B cell (primary cell): ENCODE measurements at regions of chr7 and their contacts with region 1.

Region 1: DNA sequence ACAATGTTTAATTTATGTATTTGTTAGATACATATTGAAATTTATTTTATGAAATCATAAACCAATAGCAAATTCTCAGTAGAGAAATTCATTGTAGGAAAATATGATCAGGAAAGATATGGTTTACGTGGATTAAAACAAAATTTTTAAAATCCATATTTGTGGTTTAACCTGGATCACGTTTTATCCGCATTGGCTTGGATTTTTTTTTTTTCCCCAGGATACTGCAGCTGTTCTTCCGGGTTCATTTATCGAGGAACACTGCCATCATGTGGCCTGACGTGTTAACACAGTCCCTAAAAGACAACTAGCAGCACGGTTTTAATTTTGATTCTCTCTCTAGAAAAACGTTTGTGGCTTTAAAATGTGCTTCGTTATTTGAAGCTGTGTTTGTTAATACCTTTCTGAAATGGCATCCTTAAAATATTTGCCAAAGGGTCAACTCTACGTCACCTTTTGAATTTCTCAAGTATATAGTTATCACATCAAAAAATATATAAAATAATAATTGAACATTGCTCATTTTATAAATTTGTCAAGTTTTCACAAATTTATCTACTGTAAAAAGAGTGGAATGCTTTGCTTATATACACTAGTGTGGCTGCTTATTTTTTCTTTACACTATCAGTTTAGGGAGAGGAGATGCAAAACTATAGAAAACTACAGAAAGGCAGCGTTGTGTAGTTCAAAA is 8.7 kb upstream of the ASB4 start:
- DNase-seq: peak; percentile 70
- ATAC-seq: peak; percentile 64
- H3K4me3 ChIP-seq: no peak overlapping the region
- H3K4me3 Mint-ChIP-seq: no peak overlapping the region
- H3K27ac ChIP-seq: no peak overlapping the region
- H3K27ac Mint-ChIP-seq: no peak overlapping the region
- H3K4me1 ChIP-seq: no peaks in the 10 kb centered on the region
- H3K4me1 Mint-ChIP-seq: peaks cover 3% of the 10 kb centered on the region
- H3K27me3 ChIP-seq: no peaks in the 10 kb centered on the region
- H3K27me3 Mint-ChIP-seq: peaks cover 8% of the 10 kb centered on the region
- CTCF ChIP-seq: peak; percentile 91

Region 2: DNA sequence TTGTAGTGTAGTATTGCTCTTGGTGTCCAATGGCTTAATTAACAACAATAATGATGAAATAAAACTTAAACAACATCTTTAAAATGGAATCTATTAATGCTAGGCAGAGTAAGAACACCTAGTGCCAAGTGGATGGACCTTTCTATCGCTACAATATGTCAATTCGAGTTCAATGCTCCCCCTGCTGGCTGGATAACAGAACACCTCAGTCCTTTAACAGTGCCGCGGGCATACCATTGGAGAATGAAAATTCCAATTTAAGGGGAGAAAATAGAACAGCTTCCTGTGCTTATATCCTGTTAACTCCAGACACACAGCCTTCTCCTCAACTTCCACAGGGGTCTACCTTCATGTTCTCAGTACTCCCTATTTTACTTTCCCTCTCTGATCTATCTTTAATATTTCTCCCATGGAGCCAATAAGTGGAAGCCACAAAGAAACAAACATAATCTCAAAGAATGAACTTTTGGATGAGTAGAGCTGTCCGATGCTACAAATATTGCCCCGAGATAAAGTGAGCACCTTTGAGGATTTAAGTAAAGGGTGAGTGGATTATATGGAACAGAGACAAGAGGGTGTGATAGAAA is 1040.9 kb before region 1 on chr7:
- CTCF ChIA-PET with region 1: interaction called, 14 read pairs
- POLR2A ChIA-PET with region 1: no interaction called
- intact Hi-C with region 1: no loop called
- DNase-seq: peak; percentile 71
- ATAC-seq: peak; percentile 78
- H3K4me3 ChIP-seq: no peak overlapping the region
- H3K4me3 Mint-ChIP-seq: no peak overlapping the region
- H3K27ac ChIP-seq: no peak overlapping the region
- H3K27ac Mint-ChIP-seq: no peak overlapping the region
- H3K4me1 ChIP-seq: no peaks in the 10 kb centered on the region
- H3K4me1 Mint-ChIP-seq: no peaks in the 10 kb centered on the region
- H3K27me3 ChIP-seq: peaks cover 0 to 14% (median 7%) of the 10 kb centered on the region in 4 experiments
- H3K27me3 Mint-ChIP-seq: peaks cover 26% of the 10 kb centered on the region
- CTCF ChIP-seq: peak; percentile 90

Region 3: DNA sequence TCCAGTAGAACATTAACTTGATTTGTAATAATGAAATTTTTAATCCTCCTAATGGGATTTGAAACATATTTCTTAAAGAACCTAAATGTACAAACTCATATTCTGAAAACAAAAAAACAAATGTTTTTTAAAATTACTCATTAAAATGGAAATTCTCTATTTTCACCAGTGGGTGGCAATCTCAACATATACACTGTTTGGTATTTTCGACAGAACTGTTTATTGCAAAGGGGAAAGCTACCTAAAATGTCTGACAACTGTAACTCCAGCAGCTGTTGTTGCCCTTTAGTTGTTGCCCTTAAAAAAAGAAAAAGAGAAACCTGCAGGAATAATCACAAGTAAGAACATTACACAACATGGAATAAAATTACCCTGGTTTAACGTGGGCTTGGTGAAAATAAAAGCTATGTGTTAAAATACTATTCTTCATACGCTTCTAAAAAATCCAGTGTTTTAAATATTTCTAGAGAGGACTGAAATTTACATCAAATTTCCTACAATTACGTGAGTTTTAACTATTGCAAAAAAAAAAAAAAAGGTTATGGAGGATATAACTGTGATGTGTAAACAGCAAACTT is 1027.8 kb before region 1 on chr7:
- CTCF ChIA-PET with region 1: interaction called, 246 read pairs
- POLR2A ChIA-PET with region 1: no interaction called
- intact Hi-C with region 1: loop called (anchors 1 kb)
- DNase-seq: peak; percentile 54
- ATAC-seq: no peak
- H3K4me3 ChIP-seq: no peak overlapping the region
- H3K4me3 Mint-ChIP-seq: no peak overlapping the region
- H3K27ac ChIP-seq: no peak overlapping the region
- H3K27ac Mint-ChIP-seq: no peak overlapping the region
- H3K4me1 ChIP-seq: no peaks in the 10 kb centered on the region
- H3K4me1 Mint-ChIP-seq: no peaks in the 10 kb centered on the region
- H3K27me3 ChIP-seq: peaks cover 0 to 6% (median 0%) of the 10 kb centered on the region in 4 experiments
- H3K27me3 Mint-ChIP-seq: peaks cover 10% of the 10 kb centered on the region
- CTCF ChIP-seq: peak; percentile 83

Region 4: DNA sequence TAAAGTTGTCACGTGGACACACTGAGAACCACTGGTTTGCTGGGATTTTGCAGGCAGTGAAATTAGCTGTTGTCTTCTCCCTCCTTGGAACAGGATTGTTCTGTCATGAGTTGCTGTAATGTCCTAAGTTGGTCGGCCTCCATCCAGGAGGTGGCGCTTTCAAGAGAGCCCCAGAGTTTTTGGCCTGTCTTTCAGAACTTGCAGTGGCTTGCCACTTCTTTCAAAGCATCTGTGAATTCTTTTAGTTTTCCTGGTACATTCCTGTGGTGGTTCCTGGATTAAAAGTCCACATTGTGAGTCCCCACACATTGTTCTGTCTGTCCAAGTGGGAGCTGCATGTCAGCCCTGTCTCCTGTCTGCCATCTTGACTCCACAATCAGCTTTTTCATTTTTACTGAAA is 286.5 kb before region 1 on chr7:
- CTCF ChIA-PET with region 1: interaction called, 13 read pairs
- POLR2A ChIA-PET with region 1: no interaction called
- intact Hi-C with region 1: no loop called
- DNase-seq: peak; percentile 4
- ATAC-seq: no peak
- H3K4me3 ChIP-seq: no peak overlapping the region
- H3K4me3 Mint-ChIP-seq: no peak overlapping the region
- H3K27ac ChIP-seq: no peak overlapping the region
- H3K27ac Mint-ChIP-seq: no peak overlapping the region
- H3K4me1 ChIP-seq: no peaks in the 10 kb centered on the region
- H3K4me1 Mint-ChIP-seq: no peaks in the 10 kb centered on the region
- H3K27me3 ChIP-seq: no peaks in the 10 kb centered on the region
- H3K27me3 Mint-ChIP-seq: no peaks in the 10 kb centered on the region
- CTCF ChIP-seq: no peak

Region 5: GRCh38 chr7:95396136-95397032 is 80.7 kb before region 1 on chr7 and contains the start of gene PON3:
- CTCF ChIA-PET with region 1: interaction called, 17 read pairs
- POLR2A ChIA-PET with region 1: no interaction called
- intact Hi-C with region 1: no loop called
- DNase-seq: peak; percentile 44
- ATAC-seq: peak; percentile 54
- H3K4me3 ChIP-seq: peak within 1 kb of the TSS in 4 of 5 experiments; percentile 21 to 51 (median 46)
- H3K4me3 Mint-ChIP-seq: peak within 1 kb of the TSS; percentile 75
- H3K27ac ChIP-seq: no peak within 1 kb of the TSS
- H3K27ac Mint-ChIP-seq: no peak within 1 kb of the TSS
- H3K4me1 ChIP-seq: peaks cover 6 to 8% of the 10 kb centered on the region in 2 donors
- H3K4me1 Mint-ChIP-seq: no peaks in the 10 kb centered on the region
- H3K27me3 ChIP-seq: peaks cover 0 to 21% (median 12%) of the 10 kb centered on the region in 4 experiments
- H3K27me3 Mint-ChIP-seq: peaks cover 42% of the 10 kb centered on the region
- CTCF ChIP-seq: peak; percentile 29
- total RNA-seq, gene PON3: not detected in 2 replicates

Region 6: DNA sequence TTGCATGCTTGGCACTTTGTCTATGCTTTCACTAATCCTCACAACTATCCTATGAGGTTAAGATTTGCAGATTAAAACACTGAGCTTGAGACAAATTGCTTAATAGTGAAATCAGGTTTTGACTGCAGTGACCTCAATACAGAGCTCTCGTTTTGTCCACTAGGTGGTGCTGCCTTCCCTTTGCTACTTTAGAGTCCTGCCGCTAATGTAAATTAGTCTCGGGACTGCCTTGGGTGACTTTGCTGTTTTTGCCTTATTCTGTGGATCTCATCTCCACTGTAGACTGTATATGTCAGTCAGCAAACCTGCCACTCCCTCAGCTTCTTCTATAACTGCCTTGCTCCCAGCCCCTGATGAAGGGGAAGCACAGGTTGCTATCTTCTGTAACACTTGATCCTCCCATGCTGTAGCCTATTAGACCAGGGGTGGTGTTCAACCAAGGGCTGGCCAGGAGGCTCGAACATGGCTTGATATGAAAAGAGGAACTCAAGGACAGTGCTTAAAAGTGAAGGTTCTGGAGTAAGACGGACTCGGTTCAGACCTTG is 34.7 kb after region 1 on chr7:
- CTCF ChIA-PET with region 1: interaction called, 11 read pairs
- POLR2A ChIA-PET with region 1: no interaction called
- intact Hi-C with region 1: no loop called
- DNase-seq: peak; percentile 79
- ATAC-seq: peak; percentile 89
- H3K4me3 ChIP-seq: no peak overlapping the region
- H3K4me3 Mint-ChIP-seq: peak overlapping the region; percentile 37
- H3K27ac ChIP-seq: no peak overlapping the region
- H3K27ac Mint-ChIP-seq: no peak overlapping the region
- H3K4me1 ChIP-seq: peaks cover 5% of the 10 kb centered on the region in 2 donors
- H3K4me1 Mint-ChIP-seq: peaks cover 4% of the 10 kb centered on the region
- H3K27me3 ChIP-seq: peaks cover 0 to 6% (median 0%) of the 10 kb centered on the region in 4 experiments
- H3K27me3 Mint-ChIP-seq: no peaks in the 10 kb centered on the region
- CTCF ChIP-seq: peak; percentile 94